Endothelial cell of umbilical vein (primary cell): ENCODE measurements at regions of chr3 and their contacts with region 1.

Region 1: GRCh38 chr3:122679085-122679881 is 1.4 kb upstream of the PARP14 start:
- DNase-seq: peak; percentile 79
- H3K4me3 ChIP-seq: peak overlapping the region in 2 of 3 experiments; percentile 6 to 8
- H3K27ac ChIP-seq: peak overlapping the region; percentile 65
- H3K4me1 ChIP-seq: peaks cover 20% of the 10 kb centered on the region
- H3K27me3 ChIP-seq: no peaks in the 10 kb centered on the region
- CTCF ChIP-seq: peak; percentile 75 to 80
- POLR2A ChIP-seq: no peak

Region 2: DNA sequence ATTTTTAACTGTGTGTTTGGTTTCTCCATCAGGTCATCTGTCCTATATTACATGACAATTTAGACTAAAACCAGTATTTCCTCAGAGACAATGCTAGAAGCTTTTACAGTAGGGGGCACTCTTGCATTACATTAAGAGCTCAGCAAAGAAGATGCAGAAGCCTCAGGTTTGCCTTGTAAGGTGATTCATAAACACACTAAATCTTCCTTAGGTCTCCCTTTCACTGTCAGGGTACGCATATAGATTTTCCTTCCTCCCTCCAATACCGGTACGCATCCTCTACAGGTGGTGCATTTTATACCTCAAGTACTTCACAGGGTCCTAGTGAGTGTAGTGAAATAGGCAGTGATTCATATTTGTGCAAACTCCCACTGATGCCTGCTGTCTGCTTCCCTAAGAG is 577.6 kb before region 1 on chr3:
- CTCF ChIA-PET with region 1: interaction called, 6 read pairs
- POLR2A ChIA-PET with region 1: no interaction called
- dilution Hi-C with region 1: no loop called
- intact Hi-C with region 1: loop called (anchors 10 kb)
- DNase-seq: peak; percentile 45
- H3K4me3 ChIP-seq: no peak overlapping the region
- H3K27ac ChIP-seq: no peak overlapping the region
- H3K4me1 ChIP-seq: no peaks in the 10 kb centered on the region
- H3K27me3 ChIP-seq: peaks cover 8 to 11% of the 10 kb centered on the region in 2 experiments
- CTCF ChIP-seq: peak in 1 of 2 donors; percentile 34
- POLR2A ChIP-seq: no peak

Region 3: DNA sequence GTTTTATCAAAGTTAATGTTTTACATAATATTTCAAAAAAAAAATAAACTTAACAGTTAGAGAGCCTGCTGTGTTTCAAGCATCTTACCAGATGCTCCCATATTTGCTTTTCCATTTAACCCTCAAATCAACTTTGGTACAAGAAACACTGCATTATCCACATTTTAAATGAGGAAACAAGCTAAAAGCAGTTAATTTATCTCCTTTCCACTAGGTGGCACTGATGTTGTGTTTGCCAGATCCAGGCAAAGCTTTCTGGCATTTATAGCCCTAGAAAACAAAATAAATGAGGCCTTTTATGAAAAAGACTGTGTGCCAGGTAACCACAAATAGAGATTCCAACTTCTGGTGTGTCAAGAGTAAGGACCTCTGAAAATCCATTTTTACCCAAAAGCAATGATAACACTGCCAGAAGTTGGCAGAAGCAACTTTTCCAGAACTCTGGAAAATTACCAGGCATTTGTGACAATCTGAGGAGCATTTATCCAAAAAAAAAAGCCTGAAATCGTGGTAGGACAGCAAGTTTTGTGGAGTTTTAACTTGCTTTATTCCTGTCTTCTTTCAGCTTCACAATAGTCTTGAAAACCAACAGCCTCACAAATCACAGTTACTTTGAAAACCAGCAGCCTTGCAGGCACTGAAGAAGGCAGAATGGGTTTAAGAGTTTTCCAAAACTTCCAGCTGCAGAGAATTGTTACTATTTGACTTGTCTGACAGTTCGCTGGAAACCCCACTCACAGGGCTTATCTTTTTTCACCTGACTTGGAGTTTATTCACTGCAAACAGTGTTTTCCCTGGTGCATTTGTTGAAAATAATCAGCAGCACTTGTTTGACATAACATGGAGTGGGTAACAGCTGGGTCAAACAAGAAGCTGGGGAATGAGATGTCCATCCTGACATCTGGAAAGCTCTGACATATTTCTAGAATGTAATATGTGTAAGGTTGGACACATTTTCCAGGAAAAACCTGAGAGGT is 286.1 kb before region 1 on chr3:
- CTCF ChIA-PET with region 1: interaction called, 120 read pairs
- POLR2A ChIA-PET with region 1: interaction called, 4 read pairs
- dilution Hi-C with region 1: no loop called
- intact Hi-C with region 1: loop called (anchors 1 kb)
- DNase-seq: peak; percentile 56
- H3K4me3 ChIP-seq: no peak overlapping the region
- H3K27ac ChIP-seq: no peak overlapping the region
- H3K4me1 ChIP-seq: peaks cover 4% of the 10 kb centered on the region
- H3K27me3 ChIP-seq: no peaks in the 10 kb centered on the region
- CTCF ChIP-seq: peak; percentile 56 to 61
- POLR2A ChIP-seq: no peak

Region 4: DNA sequence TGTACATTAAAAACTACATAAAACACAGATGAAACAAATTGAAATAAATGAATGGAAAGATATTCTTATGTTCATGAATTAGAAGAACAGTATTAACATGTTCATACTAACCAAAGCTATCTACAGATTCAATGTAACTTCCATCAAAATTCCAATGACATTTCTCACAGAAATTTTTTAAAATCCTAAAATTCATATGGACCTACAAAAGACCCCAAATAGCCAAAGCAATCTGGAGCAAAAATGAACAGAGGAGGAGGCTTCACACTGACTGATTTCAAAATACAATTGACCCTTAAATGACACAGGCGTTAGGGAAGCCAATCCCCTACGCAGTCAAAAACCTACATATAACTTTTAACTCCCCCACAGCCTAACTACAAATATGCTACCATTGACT is 204.0 kb before region 1 on chr3:
- CTCF ChIA-PET with region 1: no interaction called
- POLR2A ChIA-PET with region 1: no interaction called
- dilution Hi-C with region 1: no loop called
- intact Hi-C with region 1: no loop called
- DNase-seq: no peak
- H3K4me3 ChIP-seq: no peak overlapping the region
- H3K27ac ChIP-seq: no peak overlapping the region
- H3K4me1 ChIP-seq: no peaks in the 10 kb centered on the region
- H3K27me3 ChIP-seq: no peaks in the 10 kb centered on the region
- CTCF ChIP-seq: no peak
- POLR2A ChIP-seq: no peak

Region 5: DNA sequence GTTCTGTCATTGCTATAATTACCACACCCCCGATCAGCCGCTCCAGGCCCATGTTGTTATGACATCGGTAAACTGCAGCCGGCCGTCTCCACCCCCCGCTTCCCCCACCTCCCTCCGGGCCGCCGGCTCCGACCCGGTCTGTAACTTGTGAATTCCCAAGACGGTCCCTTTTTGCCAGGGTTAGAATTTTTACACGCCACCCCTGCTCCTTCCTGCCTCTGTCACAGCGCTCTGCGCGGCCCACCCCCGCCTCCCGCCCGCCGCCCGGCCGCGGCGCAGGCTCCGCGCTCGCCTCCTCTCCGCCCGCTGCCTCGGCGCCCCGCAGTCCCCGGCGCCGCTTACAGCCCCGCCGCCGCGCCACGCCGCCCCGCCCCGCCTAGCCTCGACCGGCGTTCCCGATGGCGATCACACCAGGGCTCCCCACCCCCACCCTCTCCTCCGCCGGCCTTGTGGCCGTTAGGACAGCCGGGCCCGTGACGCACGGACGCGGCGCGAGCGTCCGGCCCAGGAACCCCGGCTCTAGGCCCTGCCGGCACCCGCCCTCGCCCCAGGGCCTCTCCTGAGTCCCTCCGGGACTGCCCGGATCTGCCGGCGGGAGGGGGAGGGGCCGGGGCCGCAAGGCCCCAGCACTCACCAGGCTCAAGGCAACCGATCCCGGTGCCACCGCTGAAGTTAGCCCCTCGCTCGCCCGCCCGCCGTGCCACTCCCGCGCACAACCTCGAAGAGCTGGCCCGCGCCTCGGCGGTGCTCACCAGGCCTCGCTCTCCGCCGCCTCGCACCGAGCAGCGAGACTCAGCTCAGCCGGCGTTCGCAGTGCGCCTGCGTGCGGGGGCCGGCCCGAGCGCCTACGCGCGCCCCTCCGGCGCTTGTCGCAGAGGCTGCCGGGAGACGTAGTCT is 164.9 kb before region 1 on chr3 and contains the start of gene KPNA1:
- CTCF ChIA-PET with region 1: interaction called, 6 read pairs
- POLR2A ChIA-PET with region 1: no interaction called
- dilution Hi-C with region 1: no loop called
- intact Hi-C with region 1: loop called (anchors 2 kb)
- DNase-seq: peak; percentile 92
- H3K4me3 ChIP-seq: peak within 1 kb of the TSS; percentile 55 to 96 (median 91)
- H3K27ac ChIP-seq: peak within 1 kb of the TSS; percentile 72
- H3K4me1 ChIP-seq: peaks cover 14% of the 10 kb centered on the region
- H3K27me3 ChIP-seq: peaks cover 1 to 8% of the 10 kb centered on the region in 2 experiments
- CTCF ChIP-seq: no peak
- POLR2A ChIP-seq: peak; percentile 94
- total RNA-seq, gene KPNA1: 110 and 113 TPM in 2 replicates

Region 6: GRCh38 chr3:122572940-122573412 is 106.3 kb before region 1 on chr3:
- CTCF ChIA-PET with region 1: interaction called, 10 read pairs
- POLR2A ChIA-PET with region 1: no interaction called
- dilution Hi-C with region 1: no loop called
- intact Hi-C with region 1: no loop called
- DNase-seq: peak; percentile 63
- H3K4me3 ChIP-seq: no peak overlapping the region
- H3K27ac ChIP-seq: no peak overlapping the region
- H3K4me1 ChIP-seq: peaks cover 14% of the 10 kb centered on the region
- H3K27me3 ChIP-seq: no peaks in the 10 kb centered on the region
- CTCF ChIP-seq: no peak
- POLR2A ChIP-seq: no peak

Region 7: GRCh38 chr3:122705379-122705778 is 26.1 kb after region 1 on chr3:
- CTCF ChIA-PET with region 1: no interaction called
- POLR2A ChIA-PET with region 1: no interaction called
- dilution Hi-C with region 1: no loop called
- intact Hi-C with region 1: no loop called
- DNase-seq: no peak
- H3K4me3 ChIP-seq: no peak overlapping the region
- H3K27ac ChIP-seq: no peak overlapping the region
- H3K4me1 ChIP-seq: no peaks in the 10 kb centered on the region
- H3K27me3 ChIP-seq: no peaks in the 10 kb centered on the region
- CTCF ChIP-seq: no peak
- POLR2A ChIP-seq: no peak

Region 8: GRCh38 chr3:122768042-122768372 is 88.7 kb after region 1 on chr3:
- CTCF ChIA-PET with region 1: no interaction called
- POLR2A ChIA-PET with region 1: no interaction called
- dilution Hi-C with region 1: no loop called
- intact Hi-C with region 1: no loop called
- DNase-seq: no peak
- H3K4me3 ChIP-seq: no peak overlapping the region
- H3K27ac ChIP-seq: no peak overlapping the region
- H3K4me1 ChIP-seq: peaks cover 10% of the 10 kb centered on the region
- H3K27me3 ChIP-seq: no peaks in the 10 kb centered on the region
- CTCF ChIP-seq: no peak
- POLR2A ChIP-seq: no peak

Region 9: DNA sequence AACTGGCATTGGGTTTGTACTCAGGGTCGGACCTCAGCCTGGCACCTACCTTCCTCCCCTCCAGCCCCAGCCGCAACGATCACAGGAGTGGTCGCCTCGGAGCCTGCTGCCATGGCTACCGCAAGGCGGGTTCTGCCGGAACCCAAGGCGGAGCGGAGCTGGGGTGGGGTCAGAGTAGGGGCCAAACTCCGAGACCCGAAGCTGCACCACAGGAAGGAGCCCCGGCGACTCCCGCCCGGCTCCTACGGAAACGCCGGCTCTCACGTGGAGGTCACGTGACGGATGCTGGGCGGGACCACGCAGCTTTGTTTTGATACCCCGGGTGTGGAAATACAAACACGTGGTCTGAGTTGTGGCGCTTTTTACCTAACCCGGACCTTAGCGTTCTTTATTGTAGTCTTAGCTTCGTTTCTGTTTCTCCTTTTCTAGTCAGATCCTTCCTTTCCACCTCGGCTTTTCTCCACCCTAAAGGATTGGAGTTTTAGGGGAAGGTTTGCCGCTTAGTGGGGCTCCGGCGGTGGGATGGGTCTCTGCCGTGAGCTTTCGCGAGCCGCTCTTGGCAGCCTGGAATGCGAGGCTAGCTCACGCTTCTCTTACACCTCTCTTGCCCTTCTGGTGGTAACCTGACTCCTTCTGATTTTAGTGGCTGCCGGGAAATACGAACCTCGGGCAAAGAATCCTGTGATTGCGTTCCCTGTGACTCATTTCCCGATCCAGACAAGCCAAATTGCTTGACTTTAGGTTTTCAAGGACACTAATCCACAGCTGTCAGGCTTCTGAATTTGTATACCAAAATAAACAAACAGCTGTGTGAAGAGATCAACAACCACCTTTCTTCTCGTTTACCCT is 114.5 kb after region 1 on chr3 and contains the start of gene HSPBAP1:
- CTCF ChIA-PET with region 1: interaction called, 3 read pairs
- POLR2A ChIA-PET with region 1: no interaction called
- dilution Hi-C with region 1: no loop called
- intact Hi-C with region 1: loop called (anchors 1 kb)
- DNase-seq: peak; percentile 96
- H3K4me3 ChIP-seq: peak within 1 kb of the TSS; percentile 31 to 80 (median 65)
- H3K27ac ChIP-seq: peak within 1 kb of the TSS; percentile 92
- H3K4me1 ChIP-seq: peaks cover 21% of the 10 kb centered on the region
- H3K27me3 ChIP-seq: no peaks in the 10 kb centered on the region
- CTCF ChIP-seq: no peak
- POLR2A ChIP-seq: peak; percentile 68
- total RNA-seq, gene HSPBAP1: 9.2 and 10.6 TPM in 2 replicates

Region 10: GRCh38 chr3:122918576-122919290 is 239.4 kb after region 1 on chr3:
- CTCF ChIA-PET with region 1: no interaction called
- POLR2A ChIA-PET with region 1: no interaction called
- dilution Hi-C with region 1: no loop called
- intact Hi-C with region 1: no loop called
- DNase-seq: peak; percentile 6
- H3K4me3 ChIP-seq: no peak overlapping the region
- H3K27ac ChIP-seq: no peak overlapping the region
- H3K4me1 ChIP-seq: no peaks in the 10 kb centered on the region
- H3K27me3 ChIP-seq: peaks cover 28 to 33% of the 10 kb centered on the region in 2 experiments
- CTCF ChIP-seq: no peak
- POLR2A ChIP-seq: no peak